CD4-positive, alpha-beta memory T cell (primary cell): ENCODE measurements at regions of chr9 and their contacts with region 1.

Region 1: DNA sequence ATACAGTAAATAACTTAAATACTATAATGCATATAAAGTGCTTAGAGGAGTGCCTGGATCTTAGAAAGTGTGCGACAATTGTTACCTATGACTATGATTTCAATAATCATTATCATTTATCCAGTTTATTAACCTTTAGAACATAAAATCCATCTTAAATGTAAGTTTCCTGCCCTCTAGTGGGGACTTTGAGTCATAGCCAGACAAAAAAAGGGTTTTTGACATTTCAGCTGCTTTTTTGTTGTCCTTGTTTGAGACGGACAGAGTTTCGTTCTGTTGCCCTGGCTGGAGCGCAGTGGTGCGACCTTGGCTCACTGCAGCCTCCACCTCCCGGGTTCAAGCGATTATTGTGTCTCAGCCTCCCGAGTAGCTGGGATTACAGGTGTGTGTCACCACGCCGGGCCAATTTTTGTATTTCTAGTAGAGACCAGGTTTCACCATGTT is 9.7 kb upstream of the C9orf152 start:
- DNase-seq: peak in 4 of 5 donors; percentile 10 to 19 (median 12)
- H3K4me3 ChIP-seq: no peak overlapping the region
- H3K4me3 Mint-ChIP-seq: no peak overlapping the region
- H3K27ac ChIP-seq: no peak overlapping the region
- H3K27ac Mint-ChIP-seq: peak overlapping the region in 1 of 7 donors; percentile 15
- H3K4me1 ChIP-seq: no peaks in the 10 kb centered on the region
- H3K4me1 Mint-ChIP-seq: peaks cover 2 to 4% (median 3%) of the 10 kb centered on the region in 4 donors
- H3K27me3 ChIP-seq: peaks cover 4% of the 10 kb centered on the region
- H3K27me3 Mint-ChIP-seq: peaks cover 10 to 12% of the 10 kb centered on the region in 2 donors

Region 2: GRCh38 chr9:109880277-109881169 is 337.2 kb before region 1 on chr9:
- CTCF ChIA-PET with region 1: interaction called, 13 read pairs
- POLR2A ChIA-PET with region 1: no interaction called
- intact Hi-C with region 1: no loop called
- DNase-seq: peak; percentile 14 to 41 (median 23)
- H3K4me3 ChIP-seq: no peak overlapping the region
- H3K4me3 Mint-ChIP-seq: peak overlapping the region in 4 of 8 donors; percentile 21 to 59 (median 43)
- H3K27ac ChIP-seq: no peak overlapping the region
- H3K27ac Mint-ChIP-seq: no peak overlapping the region
- H3K4me1 ChIP-seq: no peaks in the 10 kb centered on the region
- H3K4me1 Mint-ChIP-seq: peaks cover 0 to 5% (median 2%) of the 10 kb centered on the region in 4 donors
- H3K27me3 ChIP-seq: no peaks in the 10 kb centered on the region
- H3K27me3 Mint-ChIP-seq: peaks cover 1 to 4% of the 10 kb centered on the region in 2 donors

Region 3: DNA sequence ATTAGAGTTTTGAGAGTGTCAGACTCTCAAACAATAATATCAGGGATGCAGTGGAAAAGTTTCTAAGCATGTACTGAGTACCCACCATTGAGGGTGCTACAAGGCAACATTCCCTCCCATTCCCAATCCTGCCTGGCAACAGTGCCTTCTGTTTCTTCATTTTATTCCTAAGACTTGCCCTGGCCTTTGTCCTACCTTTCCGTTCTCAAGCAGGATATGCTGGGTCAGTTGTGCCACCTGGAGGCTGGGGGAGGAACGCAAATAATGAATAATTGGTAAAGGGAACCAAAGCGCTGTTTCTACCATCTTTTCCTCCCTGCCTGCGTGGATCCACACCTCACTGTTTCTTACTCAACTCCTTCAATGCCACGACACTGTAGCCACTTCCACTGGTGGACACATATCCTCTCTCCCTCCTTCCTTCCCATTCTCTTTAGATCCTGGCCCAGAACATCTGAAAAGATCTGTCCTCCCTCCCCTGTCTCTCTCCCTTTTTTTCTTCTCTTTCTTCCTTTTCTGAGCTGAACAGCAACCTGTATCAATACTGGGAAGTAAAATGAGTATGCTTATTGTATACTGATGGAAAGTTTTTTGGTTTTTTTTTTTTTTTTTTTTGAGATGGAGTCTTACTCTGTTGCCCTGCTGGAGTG is 159.2 kb before region 1 on chr9:
- CTCF ChIA-PET with region 1: no interaction called
- POLR2A ChIA-PET with region 1: no interaction called
- intact Hi-C with region 1: loop called (anchors 1 kb)
- DNase-seq: peak in 4 of 5 donors; percentile 40 to 48 (median 47)
- H3K4me3 ChIP-seq: no peak overlapping the region
- H3K4me3 Mint-ChIP-seq: no peak overlapping the region
- H3K27ac ChIP-seq: no peak overlapping the region
- H3K27ac Mint-ChIP-seq: no peak overlapping the region
- H3K4me1 ChIP-seq: no peaks in the 10 kb centered on the region
- H3K4me1 Mint-ChIP-seq: peaks cover 4 to 15% (median 7%) of the 10 kb centered on the region in 4 donors
- H3K27me3 ChIP-seq: no peaks in the 10 kb centered on the region
- H3K27me3 Mint-ChIP-seq: no peaks in the 10 kb centered on the region

Region 4: DNA sequence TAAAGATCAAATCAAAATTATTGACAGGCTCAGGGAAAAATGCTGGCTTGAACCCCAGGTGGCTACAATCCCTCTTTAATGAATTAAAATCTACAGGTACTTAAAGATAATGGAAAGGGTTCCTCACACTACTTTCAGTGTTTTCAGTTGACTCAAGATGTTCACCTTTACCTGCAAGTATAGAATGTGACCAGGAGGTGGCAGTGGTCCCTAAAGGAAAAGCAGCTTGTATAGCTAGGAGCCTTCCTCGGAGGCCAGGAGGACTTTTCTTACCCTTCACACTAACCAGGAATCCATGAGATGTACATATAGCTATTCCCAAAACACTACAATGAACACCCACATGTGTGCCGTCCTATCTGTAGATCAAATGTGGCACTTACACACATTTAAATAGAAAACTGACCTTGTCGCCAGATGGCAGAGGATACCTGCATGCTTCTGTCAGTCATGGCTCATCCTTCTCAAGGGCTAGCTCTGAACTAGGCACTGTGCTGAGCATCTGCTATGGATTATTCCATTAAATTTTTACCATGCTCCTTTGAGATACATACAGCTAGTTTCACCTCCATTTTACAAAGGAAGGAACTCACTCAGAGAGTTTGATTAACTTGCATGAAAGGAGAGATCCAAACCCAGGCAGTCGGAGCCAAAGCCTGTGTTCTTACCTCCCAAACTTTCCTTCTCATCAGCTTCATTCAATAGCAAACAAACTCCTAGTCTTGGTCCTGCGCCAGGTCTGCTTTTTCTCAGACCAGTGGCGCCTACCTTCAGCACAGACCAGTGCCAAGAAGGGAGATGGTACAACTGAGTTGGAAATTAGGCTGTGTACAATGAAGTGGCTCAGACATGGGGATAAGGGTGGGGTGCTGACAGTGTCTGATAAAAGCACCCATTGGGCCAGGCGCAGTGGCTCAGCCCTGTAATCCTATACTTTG is 34.2 kb before region 1 on chr9:
- CTCF ChIA-PET with region 1: interaction called, 58 read pairs
- POLR2A ChIA-PET with region 1: no interaction called
- intact Hi-C with region 1: loop called (anchors 1 kb)
- DNase-seq: peak in 4 of 5 donors; percentile 25 to 43 (median 40)
- H3K4me3 ChIP-seq: no peak overlapping the region
- H3K4me3 Mint-ChIP-seq: no peak overlapping the region
- H3K27ac ChIP-seq: no peak overlapping the region
- H3K27ac Mint-ChIP-seq: peak overlapping the region in 1 of 7 donors; percentile 32
- H3K4me1 ChIP-seq: no peaks in the 10 kb centered on the region
- H3K4me1 Mint-ChIP-seq: peaks cover 0 to 7% (median 0%) of the 10 kb centered on the region in 4 donors
- H3K27me3 ChIP-seq: no peaks in the 10 kb centered on the region
- H3K27me3 Mint-ChIP-seq: peaks cover 0 to 3% of the 10 kb centered on the region in 2 donors

Region 5: DNA sequence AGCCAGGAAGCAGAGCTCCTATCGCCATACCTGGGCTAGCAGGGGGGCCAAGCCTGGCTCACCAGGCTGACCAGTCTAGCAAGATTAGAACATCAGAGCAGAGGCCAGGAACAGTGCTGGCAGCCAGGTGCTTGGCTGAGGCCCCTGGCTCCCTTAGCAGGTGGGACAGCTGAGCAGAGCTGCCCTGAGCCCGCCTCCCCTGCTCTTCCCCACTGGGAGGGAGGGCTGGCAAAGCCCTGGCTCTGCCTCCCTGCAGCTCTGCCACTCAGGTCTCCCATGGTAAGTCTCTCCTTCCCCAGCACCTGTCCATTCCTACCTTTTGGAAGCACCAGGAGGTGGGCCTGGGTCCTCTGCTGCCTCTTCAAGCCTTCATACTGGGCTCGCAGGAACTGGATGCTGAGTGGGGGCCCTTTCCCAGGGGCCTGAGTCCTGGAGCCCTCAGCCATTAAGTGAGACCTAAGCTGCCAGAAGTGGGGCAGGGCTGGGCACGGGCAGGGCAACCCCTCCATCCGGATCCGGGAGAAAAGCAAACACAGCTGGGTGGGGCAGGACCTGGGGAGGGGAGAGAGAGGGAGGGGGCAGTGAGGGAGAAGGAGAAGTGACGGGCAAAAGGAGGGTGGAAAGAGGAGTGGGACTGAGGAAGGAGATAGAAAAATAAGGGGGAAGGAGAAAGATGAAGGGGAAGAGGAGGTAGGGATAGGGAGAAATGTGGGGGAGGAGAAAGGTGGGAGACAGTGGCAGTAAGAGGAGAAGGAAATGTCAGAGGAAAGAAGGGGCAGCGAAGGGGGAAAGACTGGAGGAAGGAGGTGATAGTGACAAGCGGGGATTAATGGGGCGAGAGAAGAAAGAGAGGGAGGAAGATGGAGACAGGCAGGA is 10.4 kb before region 1 on chr9:
- CTCF ChIA-PET with region 1: interaction called, 18 read pairs
- POLR2A ChIA-PET with region 1: no interaction called
- intact Hi-C with region 1: no loop called
- DNase-seq: no peak
- H3K4me3 ChIP-seq: no peak overlapping the region
- H3K4me3 Mint-ChIP-seq: no peak overlapping the region
- H3K27ac ChIP-seq: no peak overlapping the region
- H3K27ac Mint-ChIP-seq: no peak overlapping the region
- H3K4me1 ChIP-seq: no peaks in the 10 kb centered on the region
- H3K4me1 Mint-ChIP-seq: no peaks in the 10 kb centered on the region
- H3K27me3 ChIP-seq: no peaks in the 10 kb centered on the region
- H3K27me3 Mint-ChIP-seq: peaks cover 6 to 9% of the 10 kb centered on the region in 2 donors